ENCODE measurements at regions of chr10 and their contacts with region 1.

Region 1: GRCh38 chr10:110918643-110919363 is at the start of gene BBIP1:
- DNase-seq: peak; percentile 89
- ATAC-seq: peak; percentile 84
- H3K4me3 Mint-ChIP-seq: peak within 1 kb of the TSS; percentile 99
- H3K27ac Mint-ChIP-seq: peak within 1 kb of the TSS; percentile 99
- H3K4me1 Mint-ChIP-seq: peaks cover 51% of the 10 kb centered on the region
- H3K27me3 Mint-ChIP-seq: no peaks in the 10 kb centered on the region
- CTCF ChIP-seq: no peak
- total RNA-seq, gene BBIP1: 28.4 and 29.0 TPM in 2 replicates

Region 2: GRCh38 chr10:110137142-110137545 is 781.7 kb before region 1 on chr10:
- CTCF ChIA-PET with region 1: no interaction called
- POLR2A ChIA-PET with region 1: no interaction called
- intact Hi-C with region 1: loop called (anchors 2 kb)
- DNase-seq: no peak
- ATAC-seq: peak; percentile 66
- H3K4me3 Mint-ChIP-seq: no peak overlapping the region
- H3K27ac Mint-ChIP-seq: peak overlapping the region; percentile 68
- H3K4me1 Mint-ChIP-seq: peaks cover 35% of the 10 kb centered on the region
- H3K27me3 Mint-ChIP-seq: no peaks in the 10 kb centered on the region
- CTCF ChIP-seq: no peak

Region 3: DNA sequence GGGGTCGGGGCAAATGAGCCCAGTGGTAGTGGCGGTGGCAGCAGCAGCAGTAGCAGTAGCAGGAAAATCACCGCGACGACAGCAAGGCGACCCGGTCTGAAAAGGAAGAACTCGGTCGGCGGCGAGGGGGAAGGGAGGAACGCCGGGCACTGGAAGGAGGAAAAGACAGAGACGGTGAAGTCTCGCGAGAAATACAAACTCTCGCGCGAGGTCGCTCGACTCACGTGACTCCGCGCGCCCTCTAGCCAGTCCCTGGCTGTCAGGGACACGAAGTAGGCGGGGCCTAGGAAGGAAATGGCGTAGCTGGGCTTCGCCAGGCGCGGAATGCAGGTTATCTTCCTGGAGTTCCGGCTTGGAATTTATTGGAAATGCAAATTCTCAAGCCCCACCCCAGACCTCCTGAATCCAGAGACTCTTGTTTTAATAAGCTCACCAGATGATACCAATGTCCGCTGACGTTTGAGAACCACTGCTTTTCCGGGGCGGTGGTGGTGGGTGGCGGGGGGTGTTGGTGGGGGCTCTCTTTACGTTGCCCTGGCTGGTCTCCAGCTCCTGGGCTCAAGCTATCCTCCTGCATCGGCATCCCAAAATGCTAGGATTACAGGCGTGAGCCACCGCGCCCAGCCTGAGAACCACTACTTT is 613.9 kb before region 1 on chr10 and contains the start of gene SMNDC1:
- CTCF ChIA-PET with region 1: no interaction called
- POLR2A ChIA-PET with region 1: interaction called, 11 read pairs
- intact Hi-C with region 1: no loop called
- DNase-seq: peak; percentile 93
- ATAC-seq: peak; percentile 92
- H3K4me3 Mint-ChIP-seq: peak within 1 kb of the TSS; percentile 95
- H3K27ac Mint-ChIP-seq: peak within 1 kb of the TSS; percentile 99
- H3K4me1 Mint-ChIP-seq: peaks cover 54% of the 10 kb centered on the region
- H3K27me3 Mint-ChIP-seq: no peaks in the 10 kb centered on the region
- CTCF ChIP-seq: no peak
- total RNA-seq, gene SMNDC1: 32.7 and 35.6 TPM in 2 replicates

Region 4: DNA sequence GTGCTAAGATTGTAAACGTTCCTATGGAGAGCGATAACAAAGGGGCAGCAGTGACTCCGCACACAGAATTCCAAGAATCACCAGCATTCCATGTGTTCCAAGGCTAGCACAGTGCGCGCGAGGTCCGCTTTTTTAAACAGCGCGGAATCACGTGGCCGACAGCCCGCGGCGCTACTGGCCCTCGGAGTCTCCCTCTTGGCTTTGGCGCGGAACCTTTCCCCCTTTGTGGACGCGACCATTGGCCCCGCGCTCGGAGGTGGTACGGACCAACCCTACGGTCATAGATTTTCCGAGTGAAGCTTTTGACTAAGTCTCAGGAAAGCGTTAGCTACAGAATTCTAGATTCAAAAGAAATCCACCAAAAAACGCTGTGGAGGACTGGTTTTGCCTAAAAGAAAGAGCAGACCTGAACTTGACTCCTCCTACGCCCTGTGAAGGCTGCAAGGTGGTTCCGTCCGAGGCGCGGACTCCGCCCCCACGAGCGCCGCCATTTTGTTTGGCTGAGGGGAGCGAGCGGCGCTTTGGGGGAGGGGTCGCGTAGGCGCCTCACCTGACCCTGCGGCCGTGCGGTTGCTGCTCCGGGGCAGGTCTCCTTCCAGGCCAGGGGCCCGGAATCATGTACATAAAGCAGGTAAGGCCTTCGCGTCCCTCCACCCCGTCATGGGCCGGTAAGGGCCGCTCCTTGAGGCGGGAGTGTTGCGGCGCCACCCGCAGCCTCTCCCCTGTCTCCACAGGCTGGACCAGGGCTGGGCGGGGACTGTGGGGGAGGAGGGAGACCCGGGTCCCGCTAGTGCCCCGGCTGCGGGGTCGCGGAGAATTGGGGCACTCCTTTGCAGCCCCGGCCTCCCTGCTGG is 351.4 kb before region 1 on chr10 and contains the start of gene SMC3:
- CTCF ChIA-PET with region 1: no interaction called
- POLR2A ChIA-PET with region 1: no interaction called
- intact Hi-C with region 1: loop called (anchors 2 kb)
- DNase-seq: peak; percentile 89
- ATAC-seq: peak; percentile 88
- H3K4me3 Mint-ChIP-seq: peak within 1 kb of the TSS; percentile 91
- H3K27ac Mint-ChIP-seq: peak within 1 kb of the TSS; percentile 98
- H3K4me1 Mint-ChIP-seq: peaks cover 41% of the 10 kb centered on the region
- H3K27me3 Mint-ChIP-seq: no peaks in the 10 kb centered on the region
- CTCF ChIP-seq: no peak
- total RNA-seq, gene SMC3: 41.1 and 43.3 TPM in 2 replicates

Region 5: GRCh38 chr10:110864662-110865140 is 54.1 kb before region 1 on chr10:
- CTCF ChIA-PET with region 1: no interaction called
- POLR2A ChIA-PET with region 1: interaction called, 18 read pairs
- intact Hi-C with region 1: loop called (anchors 1 kb)
- DNase-seq: no peak
- ATAC-seq: peak; percentile 50
- H3K4me3 Mint-ChIP-seq: peak overlapping the region; percentile 79
- H3K27ac Mint-ChIP-seq: peak overlapping the region; percentile 97
- H3K4me1 Mint-ChIP-seq: peaks cover 98% of the 10 kb centered on the region
- H3K27me3 Mint-ChIP-seq: no peaks in the 10 kb centered on the region
- CTCF ChIP-seq: no peak

Region 6: DNA sequence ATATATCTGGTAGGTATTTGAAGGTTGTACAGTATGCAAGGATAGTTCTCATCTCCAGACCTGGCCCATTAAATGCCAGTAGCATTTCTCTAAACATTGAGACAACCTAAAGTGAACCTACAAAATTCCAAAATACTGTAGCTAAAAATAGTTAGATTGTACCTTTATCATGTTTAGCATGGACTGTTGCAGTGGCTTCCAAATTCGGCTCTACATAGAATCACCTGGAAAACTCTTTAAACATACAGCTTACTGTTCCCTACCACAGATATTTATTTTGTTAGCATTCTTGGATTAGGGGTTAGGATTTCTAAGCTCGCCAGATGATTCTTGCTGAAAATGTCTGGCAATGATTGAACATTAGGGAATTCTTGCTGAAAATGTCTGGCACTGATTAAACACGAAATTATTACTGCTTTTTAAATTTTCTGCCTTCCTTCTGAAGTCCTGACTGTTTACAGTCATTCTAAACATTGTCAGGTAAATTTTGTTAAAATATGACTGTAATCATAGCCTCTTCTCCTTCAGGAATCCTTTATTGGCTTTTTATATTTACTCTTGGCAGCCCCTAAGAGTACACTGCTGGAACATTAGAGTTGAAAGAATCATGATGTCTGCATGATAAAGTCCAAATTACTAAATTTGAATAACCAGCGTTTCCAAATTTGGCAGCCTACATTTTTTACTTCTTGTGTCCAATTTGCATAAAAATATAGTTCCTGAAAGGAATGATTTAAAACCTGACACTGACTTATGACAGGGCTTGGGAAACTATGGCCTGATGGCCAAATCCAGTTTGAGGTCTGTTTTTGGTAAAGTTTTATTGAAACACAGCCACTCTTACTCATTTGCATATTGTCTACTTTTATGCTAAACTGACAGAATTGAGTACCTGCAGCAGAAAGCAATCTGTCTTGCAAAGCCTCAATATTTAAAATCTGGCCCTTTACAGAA is 40.9 kb after region 1 on chr10:
- CTCF ChIA-PET with region 1: no interaction called
- POLR2A ChIA-PET with region 1: interaction called, 7 read pairs
- intact Hi-C with region 1: loop called (anchors 5 kb)
- DNase-seq: no peak
- ATAC-seq: no peak
- H3K4me3 Mint-ChIP-seq: no peak overlapping the region
- H3K27ac Mint-ChIP-seq: no peak overlapping the region
- H3K4me1 Mint-ChIP-seq: peaks cover 82% of the 10 kb centered on the region
- H3K27me3 Mint-ChIP-seq: no peaks in the 10 kb centered on the region
- CTCF ChIP-seq: no peak

Measured in activated B cell treated with CpG ODN at 0.5 μM for 24 hours (primary cell).